Left cardiac atrium (tissue), 4 donors: ENCODE measurements at regions of chr3 and their contacts with region 1.

Region 1: GRCh38 chr3:55485211-55485791 is 1.8 kb downstream of the WNT5A start:
- DNase-seq: peak; percentile 85
- ATAC-seq: peak; percentile 69 to 70

Region 2: GRCh38 chr3:55571913-55572312 is 86.6 kb after region 1 on chr3:
- intact Hi-C with region 1: loop called in 1 of 2 experiments (anchors 10 kb)
- DNase-seq: peak; percentile 66
- ATAC-seq: peak; percentile 90 to 92

Region 3: GRCh38 chr3:55690726-55691125 is 205.4 kb after region 1 on chr3:
- intact Hi-C with region 1: no loop called
- DNase-seq: no peak
- ATAC-seq: no peak

Region 4: DNA sequence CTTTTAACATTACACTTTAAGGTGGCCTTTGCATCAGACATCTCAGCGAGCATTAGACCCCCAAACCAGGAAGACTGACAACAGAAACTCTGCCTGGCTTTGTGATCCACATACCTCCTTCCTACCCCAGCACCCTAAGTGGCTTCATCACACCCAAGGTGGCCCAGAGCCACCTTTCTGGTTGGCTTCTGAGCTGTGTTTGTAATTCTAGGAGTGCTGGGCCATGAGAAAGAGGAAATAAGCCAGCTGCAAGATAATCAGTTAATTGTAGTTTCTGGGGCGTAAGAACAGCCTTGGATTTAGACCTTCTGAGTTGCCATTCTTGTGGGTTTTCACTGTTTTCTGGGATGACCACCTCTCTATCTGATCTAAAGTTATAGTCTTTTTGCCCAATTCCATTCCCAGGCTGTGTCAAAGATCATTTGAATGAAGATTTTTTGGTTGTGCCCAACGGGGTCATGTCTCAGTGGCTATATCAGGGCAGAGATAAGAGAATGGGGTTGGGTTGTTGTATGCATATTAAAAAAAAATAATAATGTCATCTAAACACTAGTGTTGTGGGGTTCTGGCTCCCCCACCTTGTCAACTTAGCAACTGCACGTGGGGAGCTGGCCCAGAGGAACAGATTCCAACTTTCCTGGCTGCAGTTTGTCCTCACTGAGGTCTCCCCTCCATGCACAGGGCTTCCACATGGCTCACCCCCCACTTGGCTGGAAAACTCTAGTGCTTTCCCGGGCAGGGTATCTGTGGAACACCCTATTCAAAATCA is 236.6 kb after region 1 on chr3:
- intact Hi-C with region 1: loop called in 1 of 2 experiments (anchors 10 kb)
- DNase-seq: peak; percentile 27
- ATAC-seq: peak; percentile 31 to 55

Region 5: GRCh38 chr3:56042326-56042951 is 557.1 kb after region 1 on chr3:
- intact Hi-C with region 1: loop called in 1 of 2 experiments (anchors 5 kb)
- DNase-seq: no peak
- ATAC-seq: peak; percentile 86 to 92

Region 6: DNA sequence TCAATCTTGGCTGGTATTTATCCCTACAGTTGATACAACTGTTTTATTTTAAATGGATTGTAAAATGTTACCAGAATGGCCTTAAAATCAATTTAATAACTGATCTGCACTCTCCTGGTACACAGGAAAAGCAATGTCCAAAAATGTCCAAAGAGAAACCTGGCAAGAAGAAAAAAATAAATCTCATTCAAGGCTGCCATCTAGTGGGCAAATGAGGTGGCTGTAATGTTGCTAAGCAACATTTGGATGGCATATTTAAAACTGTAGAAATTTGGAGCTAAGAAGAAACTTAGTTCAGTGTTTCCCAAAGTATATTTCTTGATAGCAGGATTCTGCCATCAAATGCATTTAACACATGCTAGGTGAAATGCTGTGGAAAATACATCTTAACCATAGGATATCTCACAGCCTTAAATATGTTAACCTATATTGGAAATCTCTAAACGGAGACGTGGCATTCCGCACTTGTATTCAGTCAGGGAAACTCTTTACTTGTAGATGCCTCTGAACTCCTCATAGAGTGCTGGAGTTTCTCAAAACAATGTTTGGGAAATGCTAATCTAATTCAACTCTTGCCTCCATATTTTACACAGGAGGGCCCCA is 766.1 kb after region 1 on chr3:
- intact Hi-C with region 1: loop called (anchors 5 kb)
- DNase-seq: no peak
- ATAC-seq: peak; percentile 49 to 65